T-cell (primary cell): ENCODE measurements at regions of chr5 and their contacts with region 1.

Region 1: GRCh38 chr5:170633235-170634081 is 129.6 kb downstream of the KCNIP1 start:
- DNase-seq: peak in 2 of 35 experiments; percentile 3 to 8
- ATAC-seq: peak in 3 of 4 experiments; percentile 28 to 73 (median 37)
- H3K4me3 ChIP-seq: peak overlapping the region; percentile 31 to 61
- H3K4me3 Mint-ChIP-seq: peak overlapping the region; percentile 62 to 91 (median 78)
- H3K27ac ChIP-seq: no peak overlapping the region
- H3K27ac Mint-ChIP-seq: peak overlapping the region in 1 of 2 donors; percentile 13
- H3K4me1 ChIP-seq: peaks cover 10 to 22% of the 10 kb centered on the region in 2 experiments
- H3K4me1 Mint-ChIP-seq: peaks cover 20 to 28% (median 23%) of the 10 kb centered on the region in 3 donors
- H3K27me3 ChIP-seq: peaks cover 0 to 31% of the 10 kb centered on the region in 2 experiments
- H3K27me3 Mint-ChIP-seq: peaks cover 5 to 16% of the 10 kb centered on the region in 2 donors

Region 2: DNA sequence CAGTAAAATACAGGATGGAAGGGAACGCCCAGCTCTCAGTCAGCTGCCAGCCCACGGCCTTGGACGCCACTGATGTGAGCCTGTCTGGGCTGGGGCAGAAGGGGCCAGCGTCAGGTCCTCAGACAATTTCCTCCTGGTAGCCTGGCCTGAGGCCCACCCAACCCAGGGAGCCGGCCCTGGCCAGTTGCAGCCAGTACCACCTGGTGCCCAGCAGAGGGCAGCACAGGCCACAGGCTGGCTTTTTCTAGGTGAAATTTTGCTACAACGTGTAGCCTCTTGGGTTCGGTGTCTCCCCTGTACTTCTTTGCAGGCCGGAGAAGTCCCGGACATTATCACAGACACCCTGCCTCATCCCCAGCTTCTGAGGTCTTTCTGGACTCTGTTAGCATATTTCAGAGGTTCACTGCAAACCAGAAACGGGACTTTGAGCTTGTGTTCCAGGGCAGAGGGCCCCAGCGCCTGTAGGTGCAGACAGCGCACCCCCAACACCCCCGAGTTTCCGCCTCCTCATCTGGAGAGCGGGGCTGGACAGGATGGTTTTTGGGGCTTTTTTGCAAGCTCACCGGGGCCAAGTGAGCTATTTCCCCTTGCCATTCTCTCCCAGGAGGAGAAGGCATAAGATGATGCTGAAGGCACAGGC is 198.4 kb before region 1 on chr5:
- CTCF ChIA-PET with region 1: interaction called, 7 to 11 read pairs
- POLR2A ChIA-PET with region 1: no interaction called
- DNase-seq: peak in 33 of 35 experiments; percentile 5 to 68 (median 35)
- ATAC-seq: peak; percentile 62 to 83 (median 75)
- H3K4me3 ChIP-seq: no peak overlapping the region
- H3K4me3 Mint-ChIP-seq: no peak overlapping the region
- H3K27ac ChIP-seq: no peak overlapping the region
- H3K27ac Mint-ChIP-seq: no peak overlapping the region
- H3K4me1 ChIP-seq: no peaks in the 10 kb centered on the region
- H3K4me1 Mint-ChIP-seq: peaks cover 0 to 1% (median 0%) of the 10 kb centered on the region in 3 donors
- H3K27me3 ChIP-seq: peaks cover 0 to 15% of the 10 kb centered on the region in 2 experiments
- H3K27me3 Mint-ChIP-seq: peaks cover 0 to 3% of the 10 kb centered on the region in 2 donors

Region 3: DNA sequence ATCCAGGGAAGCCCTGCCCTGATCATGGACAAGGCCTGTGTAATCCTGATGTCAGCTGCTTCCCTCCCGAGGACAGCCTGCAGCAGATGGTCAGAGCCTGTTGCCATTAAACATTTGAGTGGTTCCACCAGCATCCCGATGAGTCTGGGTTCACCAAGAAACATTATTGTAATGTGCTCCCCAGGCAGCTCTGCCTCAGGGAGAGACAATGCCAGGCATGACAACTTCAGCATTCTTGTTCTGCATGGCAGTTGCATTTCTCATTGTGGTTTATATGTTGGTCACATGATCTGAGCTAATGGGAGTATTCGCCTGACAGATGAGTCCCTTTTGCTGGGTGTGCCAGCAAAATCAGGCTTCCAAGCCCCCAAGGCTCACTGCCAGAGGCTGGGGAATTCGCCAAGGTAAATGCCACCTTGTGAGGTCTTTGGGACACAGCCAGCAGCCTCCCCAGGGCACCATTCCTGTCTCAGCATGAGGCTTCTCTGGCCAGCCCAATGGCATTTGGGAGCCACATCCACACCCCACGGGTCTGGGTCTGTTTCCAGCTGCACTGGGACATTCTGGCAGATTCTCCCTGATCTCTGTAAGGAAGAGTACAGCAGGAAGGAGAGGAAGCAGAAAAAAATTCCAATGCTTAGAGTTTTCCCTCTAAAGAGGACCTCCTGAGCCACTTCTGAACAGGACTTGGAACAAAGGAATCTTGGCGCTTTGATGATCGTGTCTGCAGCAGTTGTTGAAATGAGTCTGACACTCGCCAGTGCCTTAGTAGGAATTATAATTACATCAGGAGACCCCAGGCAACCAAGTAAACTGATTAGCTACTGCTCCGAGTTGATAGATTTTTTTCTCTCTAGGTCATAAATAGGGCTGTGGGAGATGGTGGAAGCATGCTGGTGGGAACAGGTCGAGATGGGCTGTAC is 111.0 kb before region 1 on chr5:
- CTCF ChIA-PET with region 1: no interaction called
- POLR2A ChIA-PET with region 1: no interaction called
- DNase-seq: no peak
- ATAC-seq: no peak
- H3K4me3 ChIP-seq: no peak overlapping the region
- H3K4me3 Mint-ChIP-seq: no peak overlapping the region
- H3K27ac ChIP-seq: no peak overlapping the region
- H3K27ac Mint-ChIP-seq: no peak overlapping the region
- H3K4me1 ChIP-seq: no peaks in the 10 kb centered on the region
- H3K4me1 Mint-ChIP-seq: no peaks in the 10 kb centered on the region
- H3K27me3 ChIP-seq: peaks cover 0 to 15% of the 10 kb centered on the region in 2 experiments
- H3K27me3 Mint-ChIP-seq: peaks cover 11 to 12% of the 10 kb centered on the region in 2 donors

Region 4: GRCh38 chr5:170715141-170715540 is 81.7 kb after region 1 on chr5:
- CTCF ChIA-PET with region 1: no interaction called
- POLR2A ChIA-PET with region 1: no interaction called
- DNase-seq: no peak
- ATAC-seq: no peak
- H3K4me3 ChIP-seq: no peak overlapping the region
- H3K4me3 Mint-ChIP-seq: no peak overlapping the region
- H3K27ac ChIP-seq: no peak overlapping the region
- H3K27ac Mint-ChIP-seq: no peak overlapping the region
- H3K4me1 ChIP-seq: no peaks in the 10 kb centered on the region
- H3K4me1 Mint-ChIP-seq: no peaks in the 10 kb centered on the region
- H3K27me3 ChIP-seq: peaks cover 5 to 19% of the 10 kb centered on the region in 2 experiments
- H3K27me3 Mint-ChIP-seq: peaks cover 26 to 36% of the 10 kb centered on the region in 2 donors